Transverse colon (tissue), 4 donors: ENCODE measurements at regions of chr4 and their contacts with region 1.

Region 1: DNA sequence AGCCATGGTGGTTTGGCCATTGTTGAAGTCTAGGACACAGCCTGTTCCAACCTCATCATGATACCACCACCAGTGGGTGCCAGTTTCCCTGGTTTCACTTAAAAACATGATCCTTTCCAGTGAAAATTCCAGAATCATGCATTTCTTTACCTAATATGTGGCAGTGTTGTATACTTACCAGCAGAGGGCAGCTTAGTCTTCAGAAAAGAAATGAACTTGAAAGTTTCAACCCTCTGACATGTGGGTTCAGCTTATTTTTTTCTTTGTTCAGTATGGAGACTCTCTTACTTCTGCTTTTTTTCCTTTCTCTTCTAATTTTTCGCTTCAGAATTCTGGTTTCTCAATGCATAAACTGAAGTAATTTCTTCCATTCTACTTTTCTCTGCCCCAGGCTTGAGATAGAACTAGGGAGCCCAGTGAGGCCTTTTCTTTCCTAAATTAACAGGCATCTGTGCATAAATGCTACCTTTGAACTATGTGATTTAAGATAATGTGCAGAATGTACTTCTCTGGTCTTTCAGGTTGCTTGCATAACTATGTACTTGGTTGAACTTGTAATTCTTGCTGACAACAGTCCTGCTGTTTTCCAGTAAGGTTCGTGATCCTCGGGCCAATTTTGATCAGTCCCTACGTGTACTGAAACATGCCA is 10.7 kb downstream of the LIAS start:
- DNase-seq: no peak
- H3K4me3 ChIP-seq: no peak overlapping the region
- H3K27ac ChIP-seq: peak overlapping the region; percentile 17 to 61 (median 39)
- H3K4me1 ChIP-seq: peaks cover 0 to 22% (median 7%) of the 10 kb centered on the region in 4 donors
- H3K27me3 ChIP-seq: no peaks in the 10 kb centered on the region
- CTCF ChIP-seq: peak; percentile 72 to 91 (median 82)
- EP300 ChIP-seq: no peak
- POLR2A ChIP-seq: no peak

Region 2: DNA sequence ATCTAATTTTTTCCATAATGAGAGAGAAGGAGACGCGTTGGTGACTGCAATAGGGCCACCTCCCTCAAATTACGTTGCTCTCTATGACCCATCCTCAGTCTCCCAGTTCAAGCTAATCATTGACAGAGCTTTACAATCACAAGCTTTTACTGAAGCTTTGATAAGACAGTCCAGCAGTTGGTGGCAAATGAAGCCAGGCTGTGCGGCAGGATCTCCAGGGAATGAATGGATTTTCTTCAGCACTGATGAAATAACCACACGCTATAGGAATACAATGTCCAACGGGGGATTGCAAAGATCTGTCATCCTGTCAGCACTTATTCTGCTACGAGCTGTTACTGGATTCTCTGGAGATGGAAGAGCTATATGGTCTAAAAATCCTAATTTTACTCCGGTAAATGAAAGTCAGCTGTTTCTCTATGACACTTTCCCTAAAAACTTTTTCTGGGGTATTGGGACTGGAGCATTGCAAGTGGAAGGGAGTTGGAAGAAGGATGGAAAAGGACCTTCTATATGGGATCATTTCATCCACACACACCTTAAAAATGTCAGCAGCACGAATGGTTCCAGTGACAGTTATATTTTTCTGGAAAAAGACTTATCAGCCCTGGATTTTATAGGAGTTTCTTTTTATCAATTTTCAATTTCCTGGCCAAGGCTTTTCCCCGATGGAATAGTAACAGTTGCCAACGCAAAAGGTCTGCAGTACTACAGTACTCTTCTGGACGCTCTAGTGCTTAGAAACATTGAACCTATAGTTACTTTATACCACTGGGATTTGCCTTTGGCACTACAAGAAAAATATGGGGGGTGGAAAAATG is 62.6 kb before region 1 on chr4 and contains the start of gene KLB:
- in situ Hi-C with region 1: no loop called
- intact Hi-C with region 1: no loop called
- DNase-seq: peak; percentile 48
- H3K4me3 ChIP-seq: peak within 1 kb of the TSS in 1 of 4 donors; percentile 3
- H3K27ac ChIP-seq: no peak within 1 kb of the TSS
- H3K4me1 ChIP-seq: peaks cover 0 to 5% (median 0%) of the 10 kb centered on the region in 4 donors
- H3K27me3 ChIP-seq: no peaks in the 10 kb centered on the region
- CTCF ChIP-seq: no peak
- EP300 ChIP-seq: no peak
- POLR2A ChIP-seq: no peak
- total RNA-seq, gene KLB: 0.37 to 2.5 (median 0.79) TPM in 3 of 4 donors, not detected in the other

Region 3: DNA sequence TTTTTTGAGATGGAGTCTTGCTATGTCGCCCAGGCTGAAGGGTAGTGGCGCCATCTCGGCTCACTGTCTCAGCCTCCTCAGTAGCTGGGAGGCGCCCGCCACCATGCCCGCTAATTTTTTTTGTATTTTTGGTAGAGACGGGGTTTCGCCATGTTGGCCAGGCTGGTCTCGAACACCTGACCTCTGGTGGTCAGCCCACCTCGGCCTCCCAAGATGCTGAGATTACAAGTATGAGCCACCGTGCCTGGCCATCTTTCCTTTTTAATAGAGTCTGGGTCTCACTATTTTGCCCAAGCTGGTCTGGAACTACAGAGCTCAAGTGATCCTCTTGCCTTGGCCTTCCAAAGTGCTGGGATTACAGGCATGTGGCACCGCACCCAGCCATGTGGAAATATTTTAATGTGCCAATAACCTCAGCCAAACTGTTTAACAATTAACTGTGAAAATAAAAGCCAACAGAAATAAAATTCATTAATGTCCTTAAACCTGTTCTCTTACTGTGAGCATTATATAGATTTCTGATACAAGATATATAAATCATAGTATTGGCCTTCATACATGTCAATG is 491.8 kb after region 1 on chr4:
- in situ Hi-C with region 1: loop called in 1 of 4 experiments (anchors 10 kb)
- intact Hi-C with region 1: no loop called
- DNase-seq: no peak
- H3K4me3 ChIP-seq: no peak overlapping the region
- H3K27ac ChIP-seq: no peak overlapping the region
- H3K4me1 ChIP-seq: peaks cover 0 to 11% (median 0%) of the 10 kb centered on the region in 4 donors
- H3K27me3 ChIP-seq: no peaks in the 10 kb centered on the region
- CTCF ChIP-seq: no peak
- EP300 ChIP-seq: no peak
- POLR2A ChIP-seq: no peak